ENCODE measurements at regions of chr6 and their contacts with region 1.

Region 1: GRCh38 chr6:87472525-87473418 is at the start of gene SLC35A1:
- DNase-seq: peak; percentile 73
- ATAC-seq: peak; percentile 97
- H3K4me3 ChIP-seq: peak within 1 kb of the TSS; percentile 78
- H3K27ac ChIP-seq: peak within 1 kb of the TSS; percentile 84
- H3K4me1 ChIP-seq: peaks cover 2% of the 10 kb centered on the region; the same call in 1 of the 2 replicates
- H3K27me3 ChIP-seq: no peaks in the 10 kb centered on the region
- CTCF ChIP-seq: no peak
- POLR2A ChIP-seq: 0 out of 2 replicates have a peak, but pooled peaks have one; percentile 46
- RAD21 ChIP-seq: no peak
- total RNA-seq, gene SLC35A1: 9.7 and 14.4 TPM in 2 replicates

Region 2: GRCh38 chr6:87154993-87155841 is 317.6 kb before region 1 on chr6 and contains the start of gene ZNF292:
- CTCF ChIA-PET with region 1: no interaction called
- POLR2A ChIA-PET with region 1: no interaction called
- dilution Hi-C with region 1: no loop called
- in situ Hi-C with region 1: no loop called
- intact Hi-C with region 1: loop called (anchors 10 kb)
- DNase-seq: peak; percentile 97
- ATAC-seq: peak; percentile 84
- H3K4me3 ChIP-seq: peak within 1 kb of the TSS; percentile 68
- H3K27ac ChIP-seq: peak within 1 kb of the TSS; percentile 94
- H3K4me1 ChIP-seq: peaks cover 13% of the 10 kb centered on the region
- H3K27me3 ChIP-seq: no peaks in the 10 kb centered on the region
- CTCF ChIP-seq: no peak
- POLR2A ChIP-seq: peak; percentile 59
- RAD21 ChIP-seq: no peak; the same call in 1 of the 2 replicates
- total RNA-seq, gene ZNF292: 28.3 and 36.9 TPM in 2 replicates

Region 3: GRCh38 chr6:87407901-87408720 is 64.7 kb before region 1 on chr6 and contains the start of gene CFAP206:
- CTCF ChIA-PET with region 1: no interaction called
- POLR2A ChIA-PET with region 1: no interaction called
- dilution Hi-C with region 1: no loop called
- in situ Hi-C with region 1: no loop called
- intact Hi-C with region 1: loop called (anchors 5 kb)
- DNase-seq: peak; percentile 80
- ATAC-seq: peak; percentile 89
- H3K4me3 ChIP-seq: peak within 1 kb of the TSS; percentile 85
- H3K27ac ChIP-seq: peak within 1 kb of the TSS; percentile 58; the same call in 1 of the 2 replicates
- H3K4me1 ChIP-seq: no peaks in the 10 kb centered on the region
- H3K27me3 ChIP-seq: no peaks in the 10 kb centered on the region; the same call in 1 of the 2 replicates
- CTCF ChIP-seq: no peak
- POLR2A ChIP-seq: no peak
- RAD21 ChIP-seq: no peak
- total RNA-seq, gene CFAP206: under 0.01 and 0.28 TPM in 2 replicates

Region 4: DNA sequence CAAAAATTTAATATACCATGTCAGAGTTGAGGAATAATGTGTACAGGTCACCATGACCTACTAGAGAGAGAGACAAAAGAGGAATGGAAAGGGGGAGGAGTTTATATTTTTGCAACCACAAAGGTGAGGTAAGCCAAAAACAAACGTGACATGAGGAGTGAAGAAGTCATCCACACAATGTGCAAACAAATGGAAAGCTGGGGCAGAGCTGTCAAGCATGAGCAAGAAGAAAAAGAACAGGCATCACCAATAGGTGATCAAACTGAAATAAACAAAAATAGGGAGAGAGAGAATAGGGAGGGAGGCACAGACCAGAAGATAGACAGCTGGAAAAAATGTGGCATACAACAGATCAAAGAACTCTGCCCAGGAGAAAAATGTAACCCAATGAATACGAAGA is 101.5 kb after region 1 on chr6:
- CTCF ChIA-PET with region 1: no interaction called
- POLR2A ChIA-PET with region 1: no interaction called
- dilution Hi-C with region 1: no loop called
- in situ Hi-C with region 1: no loop called
- intact Hi-C with region 1: no loop called
- DNase-seq: no peak
- ATAC-seq: no peak
- H3K4me3 ChIP-seq: no peak overlapping the region
- H3K27ac ChIP-seq: no peak overlapping the region
- H3K4me1 ChIP-seq: peaks cover 27% of the 10 kb centered on the region
- H3K27me3 ChIP-seq: no peaks in the 10 kb centered on the region
- CTCF ChIP-seq: no peak
- POLR2A ChIP-seq: no peak
- RAD21 ChIP-seq: no peak

Region 5: GRCh38 chr6:87589693-87590549 is 117.1 kb after region 1 on chr6 and contains the starts of genes ORC3 and RARS2:
- CTCF ChIA-PET with region 1: no interaction called
- POLR2A ChIA-PET with region 1: no interaction called
- dilution Hi-C with region 1: no loop called
- in situ Hi-C with region 1: no loop called
- intact Hi-C with region 1: loop called (anchors 2 kb)
- DNase-seq: peak; percentile 92
- ATAC-seq: peak; percentile 99
- H3K4me3 ChIP-seq: peak within 1 kb of the TSS; percentile 77
- H3K27ac ChIP-seq: peak within 1 kb of the TSS; percentile 90
- H3K4me1 ChIP-seq: peaks cover 2% of the 10 kb centered on the region
- H3K27me3 ChIP-seq: no peaks in the 10 kb centered on the region
- CTCF ChIP-seq: peak; percentile 3; the same call in 1 of the 2 replicates
- POLR2A ChIP-seq: peak; percentile 94
- RAD21 ChIP-seq: no peak
- total RNA-seq, gene ORC3: 30.6 and 33.1 TPM in 2 replicates
- total RNA-seq, gene RARS2: 33.0 and 56.9 TPM in 2 replicates

Region 6: GRCh38 chr6:87944541-87944954 is 471.8 kb after region 1 on chr6:
- CTCF ChIA-PET with region 1: no interaction called
- POLR2A ChIA-PET with region 1: no interaction called
- dilution Hi-C with region 1: no loop called
- in situ Hi-C with region 1: no loop called
- intact Hi-C with region 1: loop called (anchors 10 kb)
- DNase-seq: peak; percentile 36
- ATAC-seq: peak; percentile 96
- H3K4me3 ChIP-seq: no peak overlapping the region
- H3K27ac ChIP-seq: no peak overlapping the region
- H3K4me1 ChIP-seq: no peaks in the 10 kb centered on the region
- H3K27me3 ChIP-seq: peaks cover 12% of the 10 kb centered on the region
- CTCF ChIP-seq: no peak
- POLR2A ChIP-seq: no peak
- RAD21 ChIP-seq: 0 out of 2 replicates have a peak, but pooled peaks have one; percentile 4